H1 (cell line): ENCODE measurements at regions of chr1 and their contacts with region 1.

Region 1: DNA sequence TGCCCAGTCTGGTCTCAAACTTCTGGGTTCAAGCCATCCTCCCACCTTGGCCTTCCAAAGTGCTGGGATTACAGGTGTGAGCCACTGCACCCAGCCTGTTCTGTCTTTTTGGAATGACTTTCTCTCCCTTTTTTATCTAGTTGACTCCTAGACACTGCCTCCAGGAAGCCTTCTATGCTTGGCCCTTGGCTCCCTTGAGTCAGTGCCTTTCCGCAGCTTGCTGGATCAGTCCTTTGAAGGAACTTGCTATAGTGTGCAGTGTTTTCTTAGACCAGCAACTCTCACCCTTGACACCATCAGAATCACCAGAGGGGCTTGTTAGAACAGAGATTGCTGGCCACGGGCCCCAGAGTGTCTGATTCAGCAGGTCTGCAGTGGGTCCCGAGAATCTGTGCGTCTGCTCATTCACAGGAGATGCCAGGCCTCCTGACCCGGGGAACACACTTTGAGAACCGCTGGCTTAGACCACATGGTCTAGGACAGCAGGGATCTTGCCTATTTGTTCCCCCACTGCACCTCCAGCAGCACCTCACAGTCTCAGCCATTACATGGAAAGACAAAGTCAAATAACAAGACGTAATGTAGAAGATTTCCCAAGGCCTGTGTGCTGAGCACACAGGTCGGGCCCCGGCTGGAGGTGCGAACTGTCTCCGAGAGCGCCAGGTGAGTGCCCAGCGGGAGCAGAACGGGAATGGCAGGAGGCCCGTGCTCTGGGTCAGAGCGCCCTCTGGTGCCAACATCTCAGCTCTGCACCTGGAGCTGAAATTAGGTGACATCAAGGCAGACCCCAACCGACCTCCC is 27.4 kb upstream of the CTPS1 start:
- DNase-seq: peak; percentile 67 to 93
- H3K4me3 ChIP-seq: no peak overlapping the region
- H3K27ac ChIP-seq: no peak overlapping the region
- H3K4me1 ChIP-seq: peaks cover 0 to 2% (median 0%) of the 10 kb centered on the region in 4 experiments; a peak in 3 of 7 replicates
- H3K27me3 ChIP-seq: no peaks in the 10 kb centered on the region; a peak in 2 of 7 replicates
- CTCF ChIP-seq: peak; percentile 94 to 98 (median 97)
- EP300 ChIP-seq: no peak
- POLR2A ChIP-seq: no peak
- RAD21 ChIP-seq: peak; percentile 99

Region 2: DNA sequence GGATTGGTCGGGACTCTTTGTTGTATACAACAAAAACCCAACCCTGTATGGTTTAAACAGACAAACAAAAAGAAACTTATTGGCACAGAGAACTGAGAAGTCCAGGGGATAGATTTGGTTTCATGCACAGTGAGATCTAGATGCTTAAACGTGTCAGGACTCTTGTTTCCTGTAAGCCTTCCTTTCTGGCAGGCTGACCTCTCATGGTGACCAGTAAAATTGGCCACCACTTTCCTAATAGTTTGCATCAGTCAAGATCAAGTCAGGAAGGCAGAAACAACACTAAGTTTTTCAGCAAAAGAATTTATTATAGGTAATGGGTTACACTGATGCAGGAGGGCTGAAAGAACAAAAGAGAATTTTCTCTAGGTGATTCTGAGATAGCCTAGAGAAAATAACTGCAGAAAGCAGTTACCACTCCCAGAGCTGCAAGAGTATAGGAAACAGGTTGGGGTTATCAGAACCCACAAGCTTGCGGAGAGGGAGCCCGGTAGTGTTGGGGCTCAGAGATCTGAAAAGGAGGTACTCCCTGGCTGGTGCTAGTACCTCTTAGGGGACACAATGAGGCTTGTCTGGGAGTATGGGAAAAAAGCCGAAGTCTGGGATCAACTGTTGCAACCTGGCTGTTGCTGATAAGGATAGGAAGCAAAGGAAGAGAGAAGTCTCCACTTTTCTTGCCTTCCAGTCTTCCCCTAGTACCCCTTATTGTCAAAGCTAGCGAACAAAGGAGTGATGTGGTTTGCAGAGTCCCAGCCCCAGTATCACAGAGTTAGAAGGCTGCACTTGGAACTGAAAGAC is 111.4 kb before region 1 on chr1:
- CTCF ChIA-PET with region 1: interaction called, 917 read pairs
- POLR2A ChIA-PET with region 1: no interaction called
- DNase-seq: no peak
- H3K4me3 ChIP-seq: no peak overlapping the region
- H3K27ac ChIP-seq: no peak overlapping the region
- H3K4me1 ChIP-seq: no peaks in the 10 kb centered on the region; a peak in 1 of 7 replicates
- H3K27me3 ChIP-seq: no peaks in the 10 kb centered on the region; a peak in 1 of 7 replicates
- CTCF ChIP-seq: no peak
- EP300 ChIP-seq: no peak
- POLR2A ChIP-seq: no peak
- RAD21 ChIP-seq: no peak

Region 3: DNA sequence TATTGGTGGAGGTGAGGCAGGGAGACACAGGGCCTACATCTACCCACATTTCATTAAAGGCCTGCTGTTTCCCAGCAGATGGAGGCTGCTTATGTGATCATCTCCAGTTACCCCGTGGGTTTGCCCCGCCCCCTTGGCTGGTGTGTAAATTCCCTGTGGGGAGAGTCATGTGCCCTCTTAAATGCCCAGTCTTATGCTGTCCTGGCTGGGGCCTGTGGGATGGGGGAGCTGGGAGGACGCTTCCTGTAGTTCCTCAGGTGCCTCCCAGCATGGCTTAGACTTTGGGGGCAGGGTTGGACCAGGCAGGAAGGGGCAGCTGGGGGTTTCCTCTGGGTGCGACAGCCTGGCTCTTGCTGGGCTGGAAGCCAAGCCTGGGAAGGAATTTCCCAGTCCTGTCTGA is 74.4 kb before region 1 on chr1:
- CTCF ChIA-PET with region 1: interaction called, 83 read pairs
- POLR2A ChIA-PET with region 1: no interaction called
- DNase-seq: no peak
- H3K4me3 ChIP-seq: no peak overlapping the region
- H3K27ac ChIP-seq: no peak overlapping the region
- H3K4me1 ChIP-seq: peaks cover 1 to 10% (median 4%) of the 10 kb centered on the region in 4 experiments; a peak in 4 of 7 replicates
- H3K27me3 ChIP-seq: no peaks in the 10 kb centered on the region; a peak in 2 of 7 replicates
- CTCF ChIP-seq: no peak
- EP300 ChIP-seq: no peak
- POLR2A ChIP-seq: no peak
- RAD21 ChIP-seq: no peak

Region 4: DNA sequence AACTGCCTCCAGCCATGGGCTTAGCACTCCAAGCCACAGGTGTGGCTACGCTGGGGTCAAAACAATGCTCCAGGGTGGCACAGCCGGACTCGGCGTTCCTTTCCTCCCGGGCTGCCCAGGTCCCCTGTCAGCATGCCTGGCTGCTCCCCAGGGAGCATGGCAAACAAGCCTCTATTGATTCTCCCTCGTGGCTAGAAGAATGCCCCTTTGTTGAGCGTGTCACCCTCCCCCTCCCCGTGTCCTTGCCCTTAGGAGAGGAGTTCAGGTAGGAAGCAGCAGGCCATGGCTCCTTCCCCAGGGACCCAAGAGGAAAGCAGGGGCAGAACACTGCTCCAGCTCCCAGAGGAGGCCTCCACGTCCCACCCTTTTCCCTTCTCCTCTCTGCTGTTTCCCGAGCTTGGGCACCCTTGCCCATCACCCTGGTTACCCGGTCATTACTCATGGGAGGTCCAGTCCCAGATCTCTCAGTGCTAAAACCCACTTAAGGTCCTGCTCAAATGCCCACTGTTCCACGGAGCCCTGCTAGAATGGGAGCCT is 32.6 kb before region 1 on chr1:
- CTCF ChIA-PET with region 1: interaction called, 275 read pairs
- POLR2A ChIA-PET with region 1: interaction called, 4 read pairs
- DNase-seq: no peak
- H3K4me3 ChIP-seq: no peak overlapping the region
- H3K27ac ChIP-seq: no peak overlapping the region
- H3K4me1 ChIP-seq: 0 out of 7 replicates have a peak, but pooled peaks cover 0 to 5% (median 1%) of the 10 kb centered on the region in 4 experiments
- H3K27me3 ChIP-seq: no peaks in the 10 kb centered on the region
- CTCF ChIP-seq: no peak
- EP300 ChIP-seq: no peak
- POLR2A ChIP-seq: no peak
- RAD21 ChIP-seq: no peak

Region 5: DNA sequence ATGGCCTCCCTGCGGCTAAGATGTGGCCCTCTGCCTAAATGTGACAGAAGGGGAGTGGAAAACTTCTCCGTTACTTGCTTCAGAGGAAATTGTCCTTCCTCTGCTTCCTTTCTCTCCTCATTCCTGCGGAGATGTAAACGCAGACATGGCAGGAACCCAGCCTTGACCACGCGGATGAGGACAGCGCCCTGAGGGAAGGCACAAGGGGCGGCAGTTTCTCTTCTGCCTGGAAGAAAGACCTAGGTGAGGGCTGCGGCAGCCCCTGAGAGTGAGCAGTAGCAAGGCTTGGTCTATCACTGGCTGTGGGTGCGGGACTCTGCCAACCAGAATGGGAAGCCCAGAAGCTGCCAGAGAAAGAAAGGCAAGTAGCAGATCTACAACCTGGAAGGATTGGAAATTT is 13.4 kb after region 1 on chr1:
- CTCF ChIA-PET with region 1: interaction called, 30 read pairs
- POLR2A ChIA-PET with region 1: interaction called, 4 read pairs
- DNase-seq: no peak
- H3K4me3 ChIP-seq: no peak overlapping the region
- H3K27ac ChIP-seq: no peak overlapping the region
- H3K4me1 ChIP-seq: peaks cover 0 to 3% (median 0%) of the 10 kb centered on the region in 4 experiments; a peak in 3 of 7 replicates
- H3K27me3 ChIP-seq: no peaks in the 10 kb centered on the region
- CTCF ChIP-seq: no peak
- EP300 ChIP-seq: no peak
- POLR2A ChIP-seq: no peak
- RAD21 ChIP-seq: no peak

Region 6: GRCh38 chr1:41013796-41014195 is 61.7 kb after region 1 on chr1:
- CTCF ChIA-PET with region 1: no interaction called
- POLR2A ChIA-PET with region 1: no interaction called
- DNase-seq: no peak
- H3K4me3 ChIP-seq: no peak overlapping the region
- H3K27ac ChIP-seq: no peak overlapping the region
- H3K4me1 ChIP-seq: no peaks in the 10 kb centered on the region
- H3K27me3 ChIP-seq: no peaks in the 10 kb centered on the region
- CTCF ChIP-seq: no peak
- EP300 ChIP-seq: no peak
- POLR2A ChIP-seq: no peak
- RAD21 ChIP-seq: no peak